ENCODE measurements at regions of chr2 and their contacts with region 1.

Region 1: GRCh38 chr2:42360890-42361727 is at the start of gene COX7A2L:
- DNase-seq: peak; percentile 88 to 97 (median 96)
- ATAC-seq: peak; percentile 98
- H3K4me3 ChIP-seq: peak within 1 kb of the TSS; percentile 82
- H3K4me3 Mint-ChIP-seq: peak within 1 kb of the TSS; percentile 87 to 98 (median 95)
- H3K27ac ChIP-seq: peak within 1 kb of the TSS; percentile 92
- H3K27ac Mint-ChIP-seq: peak within 1 kb of the TSS; percentile 90 to 100 (median 98)
- H3K4me1 ChIP-seq: peaks cover 23 to 24% of the 10 kb centered on the region in 2 donors
- H3K4me1 Mint-ChIP-seq: peaks cover 33 to 56% (median 51%) of the 10 kb centered on the region in 7 donors
- H3K27me3 ChIP-seq: no peaks in the 10 kb centered on the region
- H3K27me3 Mint-ChIP-seq: no peaks in the 10 kb centered on the region
- total RNA-seq, gene COX7A2L: 57.3 to 87.7 (median 81.5) TPM

Region 2: GRCh38 chr2:41840702-41841551 is 520.2 kb before region 1 on chr2:
- CTCF ChIA-PET with region 1: no interaction called
- POLR2A ChIA-PET with region 1: no interaction called
- intact Hi-C with region 1: loop called (anchors 1 kb)
- DNase-seq: peak; percentile 93 to 98 (median 97)
- ATAC-seq: peak; percentile 99
- H3K4me3 ChIP-seq: peak overlapping the region; percentile 90
- H3K4me3 Mint-ChIP-seq: peak overlapping the region; percentile 90 to 99 (median 95)
- H3K27ac ChIP-seq: peak overlapping the region; percentile 83
- H3K27ac Mint-ChIP-seq: peak overlapping the region; percentile 84 to 99 (median 96)
- H3K4me1 ChIP-seq: peaks cover 0 to 5% of the 10 kb centered on the region in 2 donors
- H3K4me1 Mint-ChIP-seq: peaks cover 6 to 16% (median 10%) of the 10 kb centered on the region in 7 donors
- H3K27me3 ChIP-seq: no peaks in the 10 kb centered on the region
- H3K27me3 Mint-ChIP-seq: peaks cover 18 to 34% (median 24%) of the 10 kb centered on the region in 5 donors

Region 3: DNA sequence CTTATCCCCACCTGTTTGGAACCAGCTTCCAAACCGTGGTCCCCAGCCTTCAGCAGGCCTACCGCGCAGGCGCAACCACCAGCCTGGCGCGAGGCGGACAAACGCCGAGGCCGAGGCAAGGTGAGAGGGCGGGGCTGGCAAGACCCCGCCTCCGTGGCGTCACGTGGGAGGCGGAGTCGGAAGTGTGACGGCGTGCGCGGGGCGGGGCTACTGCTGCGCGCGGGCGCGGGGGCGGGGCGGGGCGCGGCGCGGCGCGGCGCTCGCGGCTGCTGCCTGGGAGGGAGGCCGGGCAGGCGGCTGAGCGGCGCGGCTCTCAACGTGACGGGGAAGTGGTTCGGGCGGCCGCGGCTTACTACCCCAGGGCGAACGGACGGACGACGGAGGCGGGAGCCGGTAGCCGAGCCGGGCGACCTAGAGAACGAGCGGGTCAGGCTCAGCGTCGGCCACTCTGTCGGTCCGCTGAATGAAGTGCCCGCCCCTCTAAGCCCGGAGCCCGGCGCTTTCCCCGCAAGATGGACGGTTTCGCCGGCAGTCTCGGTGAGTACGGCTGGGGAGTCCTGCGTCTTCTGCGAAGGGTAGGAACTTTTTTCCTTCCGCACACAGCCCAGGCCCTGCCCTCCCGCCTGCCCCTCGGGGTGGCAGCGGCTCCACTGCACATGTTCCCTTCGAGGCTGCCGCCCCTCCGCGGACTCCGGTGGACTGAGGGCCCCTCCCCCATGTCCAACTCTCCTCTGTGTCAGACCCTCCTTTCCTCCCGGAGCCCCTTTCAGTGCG is 191.8 kb before region 1 on chr2 and contains the start of gene EML4:
- CTCF ChIA-PET with region 1: no interaction called
- POLR2A ChIA-PET with region 1: interaction called, 6 read pairs
- intact Hi-C with region 1: loop called (anchors 1 kb)
- DNase-seq: peak; percentile 82 to 98 (median 89)
- ATAC-seq: peak; percentile 97
- H3K4me3 ChIP-seq: peak within 1 kb of the TSS; percentile 88
- H3K4me3 Mint-ChIP-seq: peak within 1 kb of the TSS in 2 of 10 donors; percentile 26 to 49
- H3K27ac ChIP-seq: peak within 1 kb of the TSS; percentile 96
- H3K27ac Mint-ChIP-seq: peak within 1 kb of the TSS in 4 of 9 donors; percentile 75 to 94 (median 84)
- H3K4me1 ChIP-seq: peaks cover 15 to 21% of the 10 kb centered on the region in 2 donors
- H3K4me1 Mint-ChIP-seq: peaks cover 9 to 27% (median 12%) of the 10 kb centered on the region in 7 donors
- H3K27me3 ChIP-seq: no peaks in the 10 kb centered on the region
- H3K27me3 Mint-ChIP-seq: peaks cover 0 to 9% (median 0%) of the 10 kb centered on the region in 5 donors
- total RNA-seq, gene EML4: 91.1 to 167 (median 143) TPM

Region 4: DNA sequence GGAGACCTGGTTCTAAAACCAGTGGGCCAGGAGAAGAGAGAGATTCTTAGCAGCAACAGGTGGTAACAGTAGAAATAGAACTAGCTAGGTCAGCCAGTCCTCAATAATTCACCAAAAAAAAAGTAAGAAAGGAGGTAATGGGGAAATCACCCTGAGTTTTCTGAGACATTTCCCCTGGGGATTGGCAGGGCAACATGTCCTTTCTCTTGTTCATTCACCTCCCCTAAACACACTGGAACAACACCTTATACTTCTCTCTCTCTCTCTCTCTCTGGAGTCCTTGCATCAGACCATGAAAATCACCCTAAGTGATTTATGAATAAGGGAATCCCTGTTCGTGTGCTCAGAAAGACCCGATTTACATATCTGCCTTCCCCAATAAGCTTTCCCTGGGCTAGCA is 64.9 kb before region 1 on chr2:
- CTCF ChIA-PET with region 1: no interaction called
- POLR2A ChIA-PET with region 1: interaction called, 6 read pairs
- intact Hi-C with region 1: loop called (anchors 2 kb)
- DNase-seq: no peak
- ATAC-seq: no peak
- H3K4me3 ChIP-seq: no peak overlapping the region
- H3K4me3 Mint-ChIP-seq: peak overlapping the region in 5 of 10 donors; percentile 3 to 77 (median 25)
- H3K27ac ChIP-seq: peak overlapping the region; percentile 24
- H3K27ac Mint-ChIP-seq: peak overlapping the region; percentile 34 to 93 (median 68)
- H3K4me1 ChIP-seq: peaks cover 35 to 53% of the 10 kb centered on the region in 2 donors
- H3K4me1 Mint-ChIP-seq: peaks cover 30 to 60% (median 53%) of the 10 kb centered on the region in 7 donors
- H3K27me3 ChIP-seq: no peaks in the 10 kb centered on the region
- H3K27me3 Mint-ChIP-seq: no peaks in the 10 kb centered on the region

Region 5: GRCh38 chr2:42568401-42569115 is 207.4 kb after region 1 on chr2 and contains the start of gene MTA3:
- CTCF ChIA-PET with region 1: no interaction called
- POLR2A ChIA-PET with region 1: no interaction called
- intact Hi-C with region 1: loop called (anchors 1 to 5 kb)
- DNase-seq: peak; percentile 51 to 76 (median 67)
- ATAC-seq: peak; percentile 85
- H3K4me3 ChIP-seq: peak within 1 kb of the TSS; percentile 52
- H3K4me3 Mint-ChIP-seq: peak within 1 kb of the TSS; percentile 89 to 99 (median 94)
- H3K27ac ChIP-seq: peak within 1 kb of the TSS; percentile 74
- H3K27ac Mint-ChIP-seq: peak within 1 kb of the TSS; percentile 88 to 97 (median 94)
- H3K4me1 ChIP-seq: peaks cover 8 to 19% of the 10 kb centered on the region in 2 donors
- H3K4me1 Mint-ChIP-seq: peaks cover 11 to 50% (median 41%) of the 10 kb centered on the region in 7 donors
- H3K27me3 ChIP-seq: no peaks in the 10 kb centered on the region
- H3K27me3 Mint-ChIP-seq: no peaks in the 10 kb centered on the region
- total RNA-seq, gene MTA3: 23.9 to 49.1 (median 34.3) TPM

Region 6: DNA sequence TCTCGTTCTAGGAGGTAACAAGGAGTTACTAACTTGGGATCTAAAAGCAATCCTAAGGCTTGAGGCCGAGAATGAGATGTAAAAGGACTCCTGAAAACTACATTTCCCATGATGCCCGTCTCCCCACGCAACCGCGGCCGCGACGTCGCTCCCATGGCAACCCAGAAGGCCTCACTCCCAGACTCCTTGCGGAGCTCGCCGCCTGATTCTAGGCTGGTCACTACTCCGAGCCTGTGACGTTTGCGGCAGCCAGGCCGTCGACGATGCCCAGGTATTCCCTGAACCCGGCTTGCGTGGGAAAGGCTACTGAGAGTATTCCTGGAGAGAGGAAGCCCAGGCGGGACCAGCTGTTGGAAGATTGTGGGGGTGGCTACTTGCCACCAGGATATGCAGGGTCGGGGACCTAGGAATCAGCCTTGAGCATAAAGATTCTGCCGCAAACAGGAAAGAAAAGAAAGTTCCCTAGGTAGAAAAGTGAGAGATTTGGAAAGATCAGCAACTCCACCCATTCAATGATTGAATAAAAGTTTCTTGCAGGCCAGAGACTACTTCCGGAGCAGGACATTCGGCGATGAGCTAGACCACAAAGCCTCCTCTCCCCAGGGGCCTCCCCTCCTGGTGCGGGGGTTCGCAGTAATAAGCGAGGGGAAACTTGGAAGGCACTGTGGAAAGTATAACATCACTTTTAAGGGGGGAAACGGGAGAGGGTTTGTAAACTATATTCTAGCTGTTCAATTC is 1412.9 kb after region 1 on chr2 and contains the start of gene DYNC2LI1:
- CTCF ChIA-PET with region 1: no interaction called
- POLR2A ChIA-PET with region 1: no interaction called
- intact Hi-C with region 1: loop called in 1 of 2 experiments (anchors 5 kb)
- DNase-seq: peak; percentile 44 to 81 (median 65)
- ATAC-seq: peak; percentile 97
- H3K4me3 ChIP-seq: peak within 1 kb of the TSS; percentile 75
- H3K4me3 Mint-ChIP-seq: peak within 1 kb of the TSS; percentile 92 to 99 (median 96)
- H3K27ac ChIP-seq: peak within 1 kb of the TSS; percentile 67
- H3K27ac Mint-ChIP-seq: peak within 1 kb of the TSS; percentile 35 to 93 (median 79)
- H3K4me1 ChIP-seq: no peaks in the 10 kb centered on the region
- H3K4me1 Mint-ChIP-seq: peaks cover 10 to 21% (median 13%) of the 10 kb centered on the region in 7 donors
- H3K27me3 ChIP-seq: no peaks in the 10 kb centered on the region
- H3K27me3 Mint-ChIP-seq: peaks cover 0 to 4% (median 0%) of the 10 kb centered on the region in 5 donors
- total RNA-seq, gene DYNC2LI1: 1.9 to 6.1 (median 5.1) TPM